Heart right ventricle (tissue), 16 donors: ENCODE measurements at regions of chr4 and their contacts with region 1.

Region 1: DNA sequence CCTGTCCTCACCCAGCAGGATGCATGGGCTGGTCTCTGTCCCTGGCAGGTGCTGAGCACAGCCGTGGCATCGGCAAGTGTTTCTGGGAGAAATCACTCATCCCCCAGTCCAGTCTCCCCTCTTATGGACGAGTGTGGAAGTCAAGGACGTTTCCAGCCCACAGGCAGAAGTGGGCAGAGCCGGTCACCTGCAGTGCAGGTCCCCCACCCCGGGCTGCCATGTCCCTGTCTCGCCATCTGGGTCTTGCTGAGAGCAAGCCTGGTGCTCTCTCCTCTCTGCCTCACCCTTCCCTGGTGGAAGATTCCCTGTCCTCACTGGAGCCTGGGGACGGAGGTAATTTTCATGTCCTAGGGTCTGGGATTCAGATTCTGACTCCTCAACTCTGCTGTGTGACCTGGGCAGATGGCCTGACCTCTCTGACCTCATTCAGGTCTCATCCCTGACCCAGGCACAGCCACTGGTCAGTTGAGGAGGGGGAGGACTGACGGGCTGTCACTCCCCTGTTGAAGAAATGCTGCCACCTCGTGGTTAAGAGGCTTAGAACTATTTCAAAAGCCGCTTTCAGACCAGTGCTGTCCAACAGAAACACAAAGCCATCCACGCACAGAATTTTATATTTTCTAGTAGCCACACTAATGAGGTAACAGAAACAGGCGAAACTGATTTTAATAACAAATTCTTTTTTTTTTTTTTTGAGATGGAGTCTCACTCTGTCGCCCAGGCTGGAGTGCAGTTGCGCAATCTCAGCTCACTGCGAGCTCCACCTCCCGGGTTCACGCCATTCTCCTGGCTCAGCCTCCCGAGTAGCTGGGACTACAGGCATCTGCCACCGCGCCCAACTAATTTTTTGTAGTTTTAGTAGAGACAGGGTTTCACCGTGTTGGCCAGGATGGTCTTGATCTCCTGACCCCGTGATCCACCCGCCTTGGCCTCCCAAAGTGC is 1.8 kb downstream of the CPZ start:
- DNase-seq: peak in 1 of 2 donors; percentile 64
- ATAC-seq: peak in 7 of 8 donors; percentile 51 to 80 (median 70)
- H3K4me3 ChIP-seq: no peak overlapping the region
- H3K27ac ChIP-seq: no peak overlapping the region
- H3K4me1 ChIP-seq: peaks cover 0 to 12% (median 0%) of the 10 kb centered on the region in 9 donors
- H3K27me3 ChIP-seq: peaks cover 7 to 67% (median 47%) of the 10 kb centered on the region in 7 donors
- CTCF ChIP-seq: peak; percentile 29 to 75 (median 67)

Region 2: DNA sequence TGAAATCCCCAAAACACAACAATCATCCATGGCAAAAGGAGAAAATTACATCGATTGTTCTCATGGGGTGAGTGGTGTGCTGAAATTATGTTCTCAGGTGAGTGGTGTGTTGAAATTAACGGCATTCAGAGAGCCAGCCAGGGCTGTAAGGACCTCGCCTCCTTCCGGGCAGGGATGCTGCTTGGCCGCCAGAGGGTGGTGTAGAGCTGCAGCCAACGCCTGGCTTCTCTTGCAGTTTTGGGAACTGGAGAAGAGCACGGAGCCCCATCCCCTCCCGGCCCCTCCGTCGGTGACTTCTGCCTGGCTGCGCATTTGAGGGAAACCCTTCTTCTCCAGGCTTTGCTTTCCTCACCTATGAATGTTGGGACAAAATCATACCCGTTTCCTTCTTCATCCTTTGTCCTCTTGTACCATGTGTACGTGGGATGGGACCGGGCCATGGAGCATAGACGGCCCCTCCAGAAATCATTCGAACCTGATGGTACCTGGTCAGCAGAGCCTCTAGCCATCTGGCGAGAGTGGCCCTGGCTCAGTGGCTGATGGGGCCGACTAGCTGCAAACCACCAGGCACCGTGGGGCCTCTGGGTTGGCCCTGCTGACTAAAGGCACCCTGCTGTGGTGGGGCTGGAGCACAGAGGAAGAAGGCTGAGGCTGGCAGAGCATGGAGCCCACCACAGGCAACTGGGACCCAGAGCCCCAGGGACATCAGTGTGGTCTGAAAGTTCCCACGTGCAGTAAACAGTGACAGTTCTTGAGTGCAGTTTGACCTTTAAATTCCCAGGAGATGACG is 125.4 kb before region 1 on chr4:
- intact Hi-C with region 1: loop called (anchors 1 to 5 kb)
- DNase-seq: peak; percentile 44 to 65
- ATAC-seq: peak; percentile 57 to 70 (median 62)
- H3K4me3 ChIP-seq: no peak overlapping the region
- H3K27ac ChIP-seq: no peak overlapping the region
- H3K4me1 ChIP-seq: peaks cover 0 to 22% (median 15%) of the 10 kb centered on the region in 9 donors
- H3K27me3 ChIP-seq: no peaks in the 10 kb centered on the region
- CTCF ChIP-seq: peak; percentile 71 to 95 (median 91)

Region 3: GRCh38 chr4:8537041-8537552 is 57.3 kb before region 1 on chr4:
- intact Hi-C with region 1: no loop called
- DNase-seq: peak in 1 of 2 donors; percentile 41
- ATAC-seq: peak in 6 of 8 donors; percentile 31 to 76 (median 68)
- H3K4me3 ChIP-seq: no peak overlapping the region
- H3K27ac ChIP-seq: peak overlapping the region in 1 of 10 donors; percentile 29
- H3K4me1 ChIP-seq: peaks cover 0 to 10% (median 6%) of the 10 kb centered on the region in 9 donors
- H3K27me3 ChIP-seq: peaks cover 0 to 3% (median 0%) of the 10 kb centered on the region in 7 donors
- CTCF ChIP-seq: no peak

Region 4: GRCh38 chr4:8646296-8647093 is 52.1 kb after region 1 on chr4:
- intact Hi-C with region 1: no loop called
- DNase-seq: peak in 1 of 2 donors; percentile 2
- ATAC-seq: no peak
- H3K4me3 ChIP-seq: no peak overlapping the region
- H3K27ac ChIP-seq: no peak overlapping the region
- H3K4me1 ChIP-seq: no peaks in the 10 kb centered on the region
- H3K27me3 ChIP-seq: peaks cover 0 to 79% (median 30%) of the 10 kb centered on the region in 7 donors
- CTCF ChIP-seq: no peak

Region 5: DNA sequence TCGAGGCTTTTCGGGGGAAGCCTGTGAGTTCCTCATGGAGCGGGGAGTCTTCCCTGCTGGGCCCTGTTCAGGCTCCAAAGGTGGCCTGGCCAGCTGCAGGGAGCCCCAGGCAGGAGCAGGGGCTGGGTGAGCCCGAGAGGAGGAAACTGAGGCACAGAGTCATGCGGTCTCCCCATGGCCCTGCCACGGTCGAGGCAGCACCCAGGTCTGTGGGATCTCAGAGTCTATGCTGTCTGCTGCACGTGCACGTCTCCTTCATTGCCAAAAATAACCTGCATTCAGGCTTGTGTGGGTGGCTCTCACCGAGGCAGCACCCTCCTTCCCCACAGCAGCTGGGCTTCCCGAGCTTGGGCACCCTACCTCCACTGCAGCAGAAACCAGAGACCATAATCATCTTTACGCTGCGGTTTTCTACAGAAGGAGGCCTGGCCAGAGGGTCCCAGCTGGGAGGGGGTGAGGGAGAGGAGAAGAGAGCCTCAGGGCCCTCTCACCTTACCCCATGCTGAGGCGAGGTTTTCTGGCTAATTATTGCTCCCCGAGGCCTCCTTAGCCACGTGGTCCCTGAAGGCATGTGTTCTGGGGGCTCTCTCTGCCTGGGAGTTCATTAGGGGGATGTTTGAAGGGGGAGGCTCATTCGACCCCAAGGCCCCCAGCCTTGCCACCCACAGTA is 62.5 kb after region 1 on chr4:
- intact Hi-C with region 1: no loop called
- DNase-seq: no peak
- ATAC-seq: no peak
- H3K4me3 ChIP-seq: no peak overlapping the region
- H3K27ac ChIP-seq: no peak overlapping the region
- H3K4me1 ChIP-seq: no peaks in the 10 kb centered on the region
- H3K27me3 ChIP-seq: peaks cover 0 to 50% (median 12%) of the 10 kb centered on the region in 7 donors
- CTCF ChIP-seq: no peak

Region 6: GRCh38 chr4:8754634-8755589 is 160.5 kb after region 1 on chr4:
- intact Hi-C with region 1: no loop called
- DNase-seq: no peak
- ATAC-seq: no peak
- H3K4me3 ChIP-seq: no peak overlapping the region
- H3K27ac ChIP-seq: no peak overlapping the region
- H3K4me1 ChIP-seq: no peaks in the 10 kb centered on the region
- H3K27me3 ChIP-seq: peaks cover 0 to 4% (median 0%) of the 10 kb centered on the region in 7 donors
- CTCF ChIP-seq: no peak